Panc1 (cell line): ENCODE measurements at regions of chr5 and their contacts with region 1.

Region 1: DNA sequence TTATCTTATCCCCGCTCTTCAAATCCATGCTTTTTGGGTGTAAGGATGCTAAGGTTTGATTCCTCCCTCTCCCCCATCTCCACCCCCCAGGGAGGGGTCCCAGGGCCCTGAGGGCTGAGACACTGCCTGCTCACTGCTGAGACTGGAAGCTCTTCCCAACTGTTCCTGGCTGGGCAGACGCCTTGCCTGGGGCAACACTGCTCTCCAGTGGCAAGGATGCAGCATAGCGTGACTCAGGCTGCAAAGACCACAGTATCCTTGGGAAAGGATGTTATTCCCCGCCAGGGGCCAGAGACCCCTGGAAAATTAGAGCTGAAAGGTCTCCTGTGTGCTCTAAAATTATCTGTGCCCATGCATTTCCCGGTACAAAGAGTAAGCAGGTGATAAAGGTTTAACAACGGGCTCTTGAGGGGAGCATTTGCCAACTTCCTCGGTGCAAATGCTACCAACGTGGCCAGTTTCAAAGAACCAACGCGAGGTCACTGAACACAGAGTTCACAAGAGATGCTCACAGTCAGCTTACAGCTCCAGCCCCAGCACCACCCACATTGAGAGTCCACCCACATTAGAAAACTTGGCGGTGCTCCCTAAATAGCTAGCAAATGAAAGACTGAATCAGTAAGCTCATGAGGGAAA is 271.9 kb downstream of the NSG2 start:
- DNase-seq: peak; percentile 51
- ATAC-seq: peak; percentile 95
- H3K4me3 ChIP-seq: no peak overlapping the region
- H3K27ac ChIP-seq: no peak overlapping the region
- H3K4me1 ChIP-seq: no peaks in the 10 kb centered on the region
- H3K27me3 ChIP-seq: peaks cover 28% of the 10 kb centered on the region
- CTCF ChIP-seq: peak; percentile 90

Region 2: DNA sequence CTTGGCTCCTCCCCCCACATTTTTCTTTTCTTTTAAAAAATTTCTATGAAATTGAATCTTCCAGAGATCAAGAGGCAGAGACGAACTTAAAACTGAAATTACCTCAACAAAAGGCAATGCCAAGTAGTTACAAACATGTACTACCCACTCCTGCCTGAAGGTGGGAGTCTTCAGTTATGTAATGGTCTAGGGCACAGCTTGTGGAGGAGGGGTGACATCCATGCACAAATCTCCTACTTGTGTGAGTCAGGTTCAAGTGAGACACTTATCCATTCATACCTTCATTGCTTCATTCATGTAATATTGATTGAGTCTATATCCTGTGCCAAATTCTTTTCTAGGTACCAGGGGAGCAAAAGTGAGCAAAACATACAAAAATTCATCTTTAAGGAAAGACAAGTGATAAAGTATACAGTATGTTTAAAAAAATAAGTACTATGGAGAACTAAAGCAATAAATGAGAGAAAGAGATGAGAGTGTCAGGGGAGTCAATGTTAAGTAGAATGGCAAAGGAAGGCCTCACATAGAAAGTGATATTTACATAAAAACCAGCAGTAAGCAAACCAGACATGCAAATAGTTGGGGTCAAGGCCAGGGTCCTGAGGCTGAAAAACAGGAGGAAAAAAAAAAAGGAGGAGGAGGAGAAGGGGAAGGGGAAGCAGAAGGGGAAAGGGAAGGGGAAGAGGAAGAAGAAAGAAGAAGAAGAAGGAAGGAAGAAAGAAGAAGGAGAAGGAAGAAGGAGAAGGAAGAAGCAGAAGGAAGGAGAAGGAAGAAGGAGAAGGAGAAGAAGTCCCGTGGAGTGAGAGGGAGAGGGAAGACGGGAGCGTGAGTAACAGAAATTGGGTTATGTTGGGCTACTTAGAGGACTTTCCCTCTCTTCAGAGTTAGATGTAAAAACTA is 296.7 kb before region 1 on chr5:
- CTCF ChIA-PET with region 1: no interaction called
- POLR2A ChIA-PET with region 1: no interaction called
- in situ Hi-C with region 1: no loop called
- intact Hi-C with region 1: loop called (anchors 1 kb)
- DNase-seq: peak; percentile 45
- ATAC-seq: peak; percentile 90
- H3K4me3 ChIP-seq: no peak overlapping the region
- H3K27ac ChIP-seq: no peak overlapping the region
- H3K4me1 ChIP-seq: no peaks in the 10 kb centered on the region
- H3K27me3 ChIP-seq: peaks cover 22% of the 10 kb centered on the region
- CTCF ChIP-seq: peak; percentile 77

Region 3: DNA sequence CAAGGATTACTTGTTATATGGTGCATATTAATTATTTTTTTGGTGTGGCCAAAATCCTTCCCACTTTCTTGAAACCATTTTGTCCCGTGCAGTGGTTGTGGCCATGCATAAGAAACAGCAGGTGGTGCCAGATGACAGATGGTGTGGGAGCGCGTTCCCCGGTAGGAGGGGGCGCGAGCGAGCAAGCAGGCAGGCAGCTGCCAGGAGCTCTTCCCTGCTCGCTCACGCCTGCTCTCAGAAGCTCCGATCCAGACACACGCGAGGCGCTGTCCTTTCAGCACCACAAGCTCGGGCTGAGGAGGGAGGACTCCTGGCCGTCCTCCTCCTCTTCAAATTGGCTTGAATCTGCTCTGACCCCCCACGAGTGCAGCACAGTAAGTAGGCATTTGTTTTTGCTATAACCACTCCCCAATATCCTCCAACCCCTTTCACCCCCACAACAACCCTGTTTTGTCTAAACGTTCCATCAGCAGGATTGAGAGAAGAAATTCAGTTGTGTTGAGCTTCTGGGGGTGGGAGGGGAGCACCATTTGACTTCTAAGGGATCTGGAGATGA is 271.8 kb before region 1 on chr5 and contains the start of gene NSG2:
- CTCF ChIA-PET with region 1: interaction called, 21 read pairs
- POLR2A ChIA-PET with region 1: no interaction called
- in situ Hi-C with region 1: no loop called
- intact Hi-C with region 1: loop called (anchors 2 kb)
- DNase-seq: peak; percentile 38
- ATAC-seq: peak; percentile 100
- H3K4me3 ChIP-seq: no peak within 1 kb of the TSS; a peak in 1 of 4 replicates
- H3K27ac ChIP-seq: no peak within 1 kb of the TSS
- H3K4me1 ChIP-seq: no peaks in the 10 kb centered on the region
- H3K27me3 ChIP-seq: peaks cover 5% of the 10 kb centered on the region; the same call in 1 of the 2 replicates
- CTCF ChIP-seq: peak; percentile 78
- total RNA-seq, gene NSG2: not detected